Gastrocnemius medialis (tissue), 4 donors: ENCODE measurements at regions of chr11 and their contacts with region 1.

Region 1: GRCh38 chr11:629237-629583 is 2.2 kb upstream of the SCT start:
- DNase-seq: peak; percentile 70 to 90
- ATAC-seq: peak; percentile 87 to 88
- H3K4me3 ChIP-seq: no peak overlapping the region
- H3K27ac ChIP-seq: peak overlapping the region; percentile 81 to 93 (median 86)
- H3K4me1 ChIP-seq: peaks cover 18 to 43% of the 10 kb centered on the region in 2 donors
- H3K27me3 ChIP-seq: peaks cover 0 to 4% (median 3%) of the 10 kb centered on the region in 3 donors
- CTCF ChIP-seq: peak in 4 of 5 experiments; percentile 28 to 50 (median 38)
- POLR2A ChIP-seq: no peak

Region 2: DNA sequence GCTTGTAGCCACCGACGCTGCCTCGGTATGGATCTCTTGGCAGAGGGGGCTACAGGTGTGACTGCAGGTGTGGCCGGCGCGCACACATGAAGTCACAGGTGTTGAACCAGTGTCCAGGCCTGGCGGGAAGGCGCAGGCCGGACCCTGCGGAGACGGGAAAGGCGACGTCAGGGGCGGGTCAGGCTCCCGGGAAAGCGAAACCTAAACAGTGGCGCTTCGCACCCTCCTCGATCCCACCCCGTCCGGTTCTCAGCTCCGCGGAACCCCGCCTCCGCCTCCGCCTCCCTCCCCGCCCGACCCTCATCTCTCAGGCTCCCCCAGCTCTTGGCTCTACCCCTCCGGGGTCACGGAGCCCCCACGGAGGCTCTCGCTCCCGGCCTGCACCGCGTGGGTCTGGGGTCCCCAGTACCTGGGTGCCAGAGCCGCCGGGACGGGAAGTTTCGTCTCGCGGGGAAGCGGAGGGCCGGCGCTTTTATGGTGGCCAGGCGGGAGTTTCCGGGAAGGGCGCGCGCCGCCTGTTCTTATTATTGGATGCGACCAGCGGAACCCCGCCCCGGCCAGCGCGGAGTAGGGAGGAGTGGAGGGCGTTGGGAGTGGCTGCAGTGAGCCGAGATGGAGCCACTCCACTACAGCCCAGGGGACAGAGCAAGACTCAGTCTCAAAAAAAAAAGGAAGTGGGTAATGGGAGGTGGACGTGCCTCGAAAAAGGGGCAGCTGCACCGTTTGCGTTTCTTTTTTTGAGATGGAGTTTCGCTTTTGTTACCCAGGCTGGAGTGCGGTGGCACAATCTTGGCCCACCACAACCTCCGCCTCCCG is 13.5 kb before region 1 on chr11 and contains the start of gene IRF7:
- in situ Hi-C with region 1: no loop called
- intact Hi-C with region 1: loop called (anchors 1 kb)
- DNase-seq: peak; percentile 87 to 92
- ATAC-seq: peak; percentile 61 to 75
- H3K4me3 ChIP-seq: peak within 1 kb of the TSS; percentile 66 to 85 (median 77)
- H3K27ac ChIP-seq: peak within 1 kb of the TSS; percentile 91 to 94 (median 93)
- H3K4me1 ChIP-seq: peaks cover 40 to 43% of the 10 kb centered on the region in 2 donors
- H3K27me3 ChIP-seq: no peaks in the 10 kb centered on the region
- CTCF ChIP-seq: no peak
- POLR2A ChIP-seq: peak; percentile 84 to 92
- total RNA-seq, gene IRF7: 15.5 to 37.1 (median 26.3) TPM

Region 3: DNA sequence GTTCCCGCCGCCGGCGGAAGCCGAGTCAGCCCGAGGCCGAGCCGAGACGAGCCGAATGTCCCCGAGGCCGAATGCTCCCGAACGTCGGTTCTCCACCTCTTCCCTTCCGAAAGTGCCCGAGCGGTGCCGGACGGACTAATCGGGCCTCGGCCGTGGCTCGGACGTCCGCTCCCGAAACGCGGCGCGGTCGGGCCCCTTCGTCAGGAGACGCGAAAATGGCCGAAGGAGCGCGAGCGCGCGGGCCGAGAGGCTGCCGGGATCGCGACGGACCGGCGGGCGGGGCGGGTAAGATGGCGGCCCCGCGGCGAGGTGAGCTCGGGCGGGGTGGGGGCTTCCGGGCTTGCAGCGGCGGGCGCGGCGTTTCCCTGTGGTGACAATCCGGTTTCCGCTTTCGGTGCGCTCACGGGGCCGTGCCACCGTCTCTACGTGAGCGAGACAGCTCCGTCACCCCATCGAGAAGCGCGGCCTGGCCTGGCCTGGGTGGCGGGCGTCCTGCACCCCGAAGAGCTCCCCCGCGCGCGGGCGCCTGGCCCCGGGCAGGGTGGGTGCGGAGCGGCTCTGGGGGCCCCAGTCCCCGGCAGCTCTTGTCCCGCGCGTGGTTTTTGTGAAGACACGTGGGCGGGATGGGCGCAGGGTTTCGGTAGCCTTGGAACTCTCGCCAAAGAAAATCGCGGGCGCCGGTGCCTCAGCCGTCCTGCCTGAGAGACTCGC is 66.5 kb after region 1 on chr11 and contains the start of gene TMEM80:
- in situ Hi-C with region 1: no loop called
- intact Hi-C with region 1: loop called (anchors 5 kb)
- DNase-seq: peak; percentile 99
- ATAC-seq: peak; percentile 72 to 74
- H3K4me3 ChIP-seq: peak within 1 kb of the TSS; percentile 77 to 92 (median 89)
- H3K27ac ChIP-seq: peak within 1 kb of the TSS; percentile 92 to 100 (median 98)
- H3K4me1 ChIP-seq: peaks cover 33 to 35% of the 10 kb centered on the region in 2 donors
- H3K27me3 ChIP-seq: no peaks in the 10 kb centered on the region
- CTCF ChIP-seq: no peak
- POLR2A ChIP-seq: peak; percentile 69 to 72
- total RNA-seq, gene TMEM80: 3.2 to 22.3 (median 14.3) TPM